Activated CD4-positive, alpha-beta memory T cell treated with anti-CD3 and anti-CD28 coated beads for 36 hours (primary cell): ENCODE measurements at regions of chr15 and their contacts with region 1.

Region 1: GRCh38 chr15:81023483-81024264 is 23.0 kb downstream of the TLNRD1 start:
- DNase-seq: peak; percentile 55
- H3K4me3 Mint-ChIP-seq: peak overlapping the region; percentile 48
- H3K27ac Mint-ChIP-seq: peak overlapping the region; percentile 95
- H3K4me1 Mint-ChIP-seq: peaks cover 35% of the 10 kb centered on the region
- H3K27me3 Mint-ChIP-seq: no peaks in the 10 kb centered on the region

Region 2: GRCh38 chr15:81000624-81001151 is 23.0 kb before region 1 on chr15 and contains the start of gene TLNRD1:
- CTCF ChIA-PET with region 1: interaction called, 5 read pairs
- POLR2A ChIA-PET with region 1: interaction called, 22 read pairs
- intact Hi-C with region 1: loop called (anchors 1 kb)
- DNase-seq: peak; percentile 92
- H3K4me3 Mint-ChIP-seq: peak within 1 kb of the TSS; percentile 97
- H3K27ac Mint-ChIP-seq: peak within 1 kb of the TSS; percentile 99
- H3K4me1 Mint-ChIP-seq: peaks cover 42% of the 10 kb centered on the region
- H3K27me3 Mint-ChIP-seq: no peaks in the 10 kb centered on the region
- total RNA-seq, gene TLNRD1: 23.5 to 25.4 TPM

Region 3: DNA sequence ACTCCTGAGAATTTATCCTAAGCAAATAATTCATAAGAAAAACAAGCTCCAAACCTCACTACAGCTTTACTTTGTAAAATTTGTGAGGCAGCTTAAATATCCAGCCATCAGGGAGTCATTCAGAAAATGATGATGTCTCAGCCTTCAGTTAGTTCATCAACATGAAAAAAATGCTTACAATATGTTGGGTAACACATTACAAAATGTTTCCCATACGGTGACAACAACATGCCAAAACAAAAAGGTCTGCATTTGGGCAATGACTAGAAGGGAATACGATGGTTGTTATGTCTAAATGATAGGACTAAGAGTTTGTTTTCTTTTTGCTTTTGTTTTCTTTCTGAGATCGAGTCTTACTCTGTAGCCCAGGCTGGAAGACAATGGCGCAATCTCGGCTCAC is 63.4 kb after region 1 on chr15:
- CTCF ChIA-PET with region 1: no interaction called
- POLR2A ChIA-PET with region 1: no interaction called
- intact Hi-C with region 1: no loop called
- DNase-seq: no peak
- H3K4me3 Mint-ChIP-seq: no peak overlapping the region
- H3K27ac Mint-ChIP-seq: no peak overlapping the region
- H3K4me1 Mint-ChIP-seq: peaks cover 8% of the 10 kb centered on the region
- H3K27me3 Mint-ChIP-seq: peaks cover 2% of the 10 kb centered on the region